ENCODE measurements at regions of chr17 and their contacts with region 1.

Region 1: GRCh38 chr17:64281962-64282727 is 19.1 kb upstream of the TEX2 start:
- DNase-seq: peak; percentile 85
- ATAC-seq: peak; percentile 38
- H3K4me3 ChIP-seq: peak overlapping the region; percentile 2; the same call in 1 of the 2 replicates
- H3K27ac ChIP-seq: no peak overlapping the region
- H3K4me1 ChIP-seq: peaks cover 14% of the 10 kb centered on the region
- H3K27me3 ChIP-seq: no peaks in the 10 kb centered on the region
- CTCF ChIP-seq: peak; percentile 95

Region 2: DNA sequence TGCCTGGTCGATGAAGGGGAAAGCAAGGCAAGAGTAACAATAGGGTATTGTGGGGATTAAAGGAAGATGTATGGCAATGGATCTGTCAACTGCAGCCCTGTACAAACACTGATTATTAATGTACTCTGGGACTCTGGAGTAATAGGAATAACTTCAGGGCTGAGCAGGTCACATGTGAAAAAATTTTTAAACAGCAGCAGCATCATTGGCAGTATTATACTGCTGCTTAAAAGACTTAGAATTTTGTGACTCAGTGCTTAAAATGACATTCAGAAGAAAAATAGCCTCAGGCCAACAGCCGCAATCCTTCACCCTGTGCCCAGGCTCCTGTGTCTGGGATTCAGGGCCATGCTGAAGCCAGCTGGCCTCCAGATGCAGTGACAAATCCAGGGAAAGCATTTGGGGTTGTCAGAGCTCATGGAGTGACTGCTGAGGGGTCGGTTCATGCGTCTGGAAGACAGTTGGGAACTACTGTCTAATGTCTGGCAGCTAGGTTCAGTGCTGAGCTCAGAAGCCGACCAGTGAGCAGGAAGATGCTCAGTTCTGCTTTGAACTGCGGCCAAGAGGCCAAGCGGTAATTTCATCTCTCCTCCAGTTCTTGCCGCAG is 41.3 kb before region 1 on chr17:
- CTCF ChIA-PET with region 1: interaction called, 3 read pairs
- POLR2A ChIA-PET with region 1: no interaction called
- intact Hi-C with region 1: loop called (anchors 5 kb)
- DNase-seq: peak; percentile 43
- ATAC-seq: no peak
- H3K4me3 ChIP-seq: no peak overlapping the region
- H3K27ac ChIP-seq: no peak overlapping the region
- H3K4me1 ChIP-seq: peaks cover 23% of the 10 kb centered on the region
- H3K27me3 ChIP-seq: no peaks in the 10 kb centered on the region
- CTCF ChIP-seq: no peak

Region 3: DNA sequence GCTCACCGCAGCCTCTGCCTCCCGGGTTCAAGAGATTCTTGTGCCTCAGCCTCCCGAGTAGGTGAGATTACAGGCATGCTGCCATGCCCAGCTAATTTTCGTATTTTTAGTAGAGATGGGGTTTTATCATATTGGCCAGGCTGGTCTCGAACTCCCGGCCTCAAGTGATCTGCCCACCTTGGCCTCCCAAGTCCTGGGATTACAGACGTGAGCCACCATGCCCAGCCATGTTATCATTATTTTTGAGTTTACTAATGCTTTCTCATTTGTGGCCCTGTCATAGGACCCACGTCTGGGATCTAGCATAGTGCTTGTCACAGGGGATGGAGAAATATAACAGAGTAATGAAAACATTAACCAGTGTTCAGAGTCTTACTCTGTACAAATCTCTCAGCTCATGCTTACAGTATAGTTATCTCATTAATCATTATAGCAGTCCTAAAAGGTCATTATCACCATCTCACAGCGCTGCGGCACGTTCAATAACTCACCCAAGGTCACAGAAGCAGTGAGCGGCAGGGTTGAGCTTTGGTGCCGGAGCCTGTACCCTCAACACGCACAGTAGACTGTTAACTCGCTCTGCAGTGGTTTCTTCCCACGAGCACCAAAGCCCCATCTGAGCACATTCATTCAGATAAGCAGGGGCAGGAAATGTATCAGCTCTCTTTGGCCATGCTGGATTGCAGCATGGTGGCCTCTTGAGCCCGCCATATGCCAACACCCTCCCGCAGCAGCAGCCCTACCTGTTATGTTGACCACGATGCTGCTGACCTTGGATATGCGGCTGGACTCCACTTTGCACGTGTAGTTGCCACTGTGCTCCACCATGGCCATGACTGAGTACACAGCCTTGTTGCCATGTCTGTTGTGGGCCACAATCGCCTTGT is 87.1 kb after region 1 on chr17:
- CTCF ChIA-PET with region 1: no interaction called
- POLR2A ChIA-PET with region 1: no interaction called
- intact Hi-C with region 1: no loop called
- DNase-seq: no peak
- ATAC-seq: no peak
- H3K4me3 ChIP-seq: no peak overlapping the region
- H3K27ac ChIP-seq: no peak overlapping the region
- H3K4me1 ChIP-seq: peaks cover 5% of the 10 kb centered on the region; the same call in 1 of the 2 replicates
- H3K27me3 ChIP-seq: no peaks in the 10 kb centered on the region
- CTCF ChIP-seq: no peak

Measured in PC-3 (cell line).